Right ventricle myocardium inferior (tissue), 1 donor: ENCODE measurements at regions of chr14 and their contacts with region 1.

Region 1: DNA sequence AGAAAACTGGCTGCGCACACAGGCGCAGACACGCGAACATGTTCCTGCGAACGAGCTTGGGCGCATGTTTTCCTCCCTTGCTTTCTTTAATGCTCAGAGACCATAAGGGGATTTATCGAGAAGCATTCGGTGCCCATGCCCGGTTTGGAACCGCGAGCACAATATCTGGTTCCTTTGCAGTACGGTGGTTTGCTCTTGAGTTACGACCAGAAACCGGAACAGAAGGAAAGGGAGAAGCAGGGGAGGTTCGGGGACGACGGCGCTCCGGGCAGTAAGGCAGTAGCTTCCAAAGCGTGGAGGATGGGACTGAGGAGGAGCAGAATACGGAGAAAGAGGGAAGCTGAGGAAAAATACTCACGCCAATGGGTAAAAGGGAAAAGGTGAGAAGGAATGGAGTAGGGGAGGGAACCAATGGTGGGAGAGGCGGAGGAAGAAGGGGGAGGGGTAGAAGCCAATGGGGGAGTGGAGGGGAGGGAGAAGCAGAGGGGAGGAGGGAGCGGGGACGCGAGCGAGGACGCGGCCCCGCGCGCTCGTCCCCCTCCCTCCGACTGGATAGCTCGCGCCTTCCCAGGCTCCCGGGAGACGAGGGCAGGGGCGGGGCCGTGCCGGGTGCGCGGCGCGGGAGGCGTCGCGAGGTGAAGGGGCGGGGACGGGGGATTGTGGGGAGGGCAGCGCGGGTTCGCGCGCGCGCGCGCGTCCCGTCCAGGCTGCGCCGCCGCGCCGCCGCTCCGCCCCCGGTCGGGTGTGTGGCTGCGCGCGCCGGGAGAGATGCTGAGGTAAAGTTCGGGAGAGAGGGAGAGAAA is 625 bp upstream of the ARHGAP5 start:
- DNase-seq: peak; percentile 97
- ATAC-seq: peak; percentile 96

Region 2: GRCh38 chr14:31456841-31457664 is 619.4 kb before region 1 on chr14 and contains the start of gene DTD2:
- intact Hi-C with region 1: loop called (anchors 5 kb)
- DNase-seq: peak; percentile 99
- ATAC-seq: peak; percentile 100
- total RNA-seq, gene DTD2: 7.0 TPM

Region 3: DNA sequence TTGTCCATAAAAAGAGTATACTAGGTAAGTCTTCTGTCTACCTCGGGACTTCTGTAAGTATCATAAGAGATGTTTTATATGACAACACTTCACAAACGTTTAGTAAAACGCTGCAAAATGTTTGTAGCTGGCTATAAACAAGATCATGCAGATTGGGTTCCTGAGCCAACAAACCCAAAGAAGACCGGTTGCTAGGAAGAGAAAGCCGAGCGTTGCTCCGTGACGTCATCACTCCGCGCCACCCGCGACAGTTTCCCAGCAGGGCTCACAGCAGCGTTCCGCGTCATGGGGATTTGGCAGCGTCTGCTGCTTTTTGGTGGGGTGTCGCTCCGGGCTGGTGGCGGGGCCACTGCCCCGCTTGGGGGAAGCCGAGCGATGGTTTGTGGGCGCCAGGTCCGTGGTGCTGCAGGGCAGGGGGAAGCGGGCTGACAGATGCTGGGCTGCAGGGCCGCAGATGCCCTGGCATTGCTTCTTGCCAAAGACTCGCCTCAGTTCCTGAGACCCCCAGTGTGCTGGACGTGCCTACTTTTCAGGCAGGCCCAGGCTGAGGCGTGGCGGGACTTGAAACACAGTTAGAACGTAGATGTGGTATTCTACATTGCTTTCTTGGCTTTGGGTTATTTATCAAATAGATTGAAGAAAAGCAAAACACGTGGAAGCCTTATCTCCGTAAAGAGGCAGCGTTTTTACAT is 515.2 kb before region 1 on chr14 and contains the start of gene NUBPL:
- intact Hi-C with region 1: loop called (anchors 5 kb)
- DNase-seq: peak; percentile 98
- ATAC-seq: peak; percentile 93
- total RNA-seq, gene NUBPL: 28.6 TPM

Region 4: DNA sequence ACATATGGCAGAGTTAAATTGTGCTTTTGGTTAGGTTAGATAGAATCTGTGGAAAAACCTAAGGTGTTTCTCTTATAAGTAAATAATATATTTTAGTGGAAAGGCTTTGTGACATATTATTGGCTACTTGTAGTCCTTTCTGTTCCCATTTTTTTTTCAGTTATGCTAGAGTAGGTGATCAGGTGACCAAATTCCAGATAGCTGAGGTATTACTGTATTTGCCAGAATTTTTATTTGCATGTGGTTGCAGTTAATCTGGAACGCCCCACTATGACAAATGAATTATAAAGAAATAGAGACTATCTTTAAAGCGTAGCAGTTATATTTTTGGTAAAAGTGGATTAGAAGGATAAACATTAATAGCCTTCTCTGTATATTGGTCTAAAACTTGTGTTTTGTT is 52.6 kb after region 1 on chr14:
- intact Hi-C with region 1: loop called (anchors 5 kb)
- DNase-seq: no peak
- ATAC-seq: no peak

Region 5: GRCh38 chr14:32252030-32252670 is 175.7 kb after region 1 on chr14:
- intact Hi-C with region 1: loop called (anchors 2 kb)
- DNase-seq: no peak
- ATAC-seq: peak; percentile 82

Region 6: GRCh38 chr14:32560209-32560857 is 483.9 kb after region 1 on chr14:
- intact Hi-C with region 1: loop called (anchors 10 kb)
- DNase-seq: no peak
- ATAC-seq: peak; percentile 85